CD14-positive monocyte (primary cell): ENCODE measurements at regions of chr4 and their contacts with region 1.

Region 1: GRCh38 chr4:83034630-83035494 is at the start of gene COPS4:
- DNase-seq: peak; percentile 99 to 100 (median 99)
- H3K4me3 ChIP-seq: peak within 1 kb of the TSS; percentile 72 to 89 (median 84)
- H3K4me3 Mint-ChIP-seq: peak within 1 kb of the TSS; percentile 99
- H3K27ac ChIP-seq: peak within 1 kb of the TSS; percentile 85 to 88
- H3K27ac Mint-ChIP-seq: peak within 1 kb of the TSS; percentile 96 to 99 (median 98)
- H3K4me1 ChIP-seq: peaks cover 9 to 10% of the 10 kb centered on the region in 2 donors
- H3K4me1 Mint-ChIP-seq: peaks cover 27% of the 10 kb centered on the region
- H3K27me3 ChIP-seq: no peaks in the 10 kb centered on the region
- H3K27me3 Mint-ChIP-seq: no peaks in the 10 kb centered on the region
- CTCF ChIP-seq: peak; percentile 44
- polyA plus RNA-seq, gene COPS4: 16.0 to 54.7 (median 54.5) TPM

Region 2: GRCh38 chr4:83012687-83013419 is 22.0 kb before region 1 on chr4:
- intact Hi-C with region 1: loop called (anchors 1 to 2 kb)
- DNase-seq: peak; percentile 95 to 99 (median 96)
- H3K4me3 ChIP-seq: peak overlapping the region; percentile 80 to 98 (median 94)
- H3K4me3 Mint-ChIP-seq: peak overlapping the region; percentile 82 to 92
- H3K27ac ChIP-seq: peak overlapping the region; percentile 84 to 99
- H3K27ac Mint-ChIP-seq: peak overlapping the region; percentile 94 to 99 (median 98)
- H3K4me1 ChIP-seq: peaks cover 31 to 35% of the 10 kb centered on the region in 2 donors
- H3K4me1 Mint-ChIP-seq: peaks cover 39% of the 10 kb centered on the region
- H3K27me3 ChIP-seq: no peaks in the 10 kb centered on the region
- H3K27me3 Mint-ChIP-seq: peaks cover 0 to 1% (median 0%) of the 10 kb centered on the region in 3 donors
- CTCF ChIP-seq: peak; percentile 64

Region 3: DNA sequence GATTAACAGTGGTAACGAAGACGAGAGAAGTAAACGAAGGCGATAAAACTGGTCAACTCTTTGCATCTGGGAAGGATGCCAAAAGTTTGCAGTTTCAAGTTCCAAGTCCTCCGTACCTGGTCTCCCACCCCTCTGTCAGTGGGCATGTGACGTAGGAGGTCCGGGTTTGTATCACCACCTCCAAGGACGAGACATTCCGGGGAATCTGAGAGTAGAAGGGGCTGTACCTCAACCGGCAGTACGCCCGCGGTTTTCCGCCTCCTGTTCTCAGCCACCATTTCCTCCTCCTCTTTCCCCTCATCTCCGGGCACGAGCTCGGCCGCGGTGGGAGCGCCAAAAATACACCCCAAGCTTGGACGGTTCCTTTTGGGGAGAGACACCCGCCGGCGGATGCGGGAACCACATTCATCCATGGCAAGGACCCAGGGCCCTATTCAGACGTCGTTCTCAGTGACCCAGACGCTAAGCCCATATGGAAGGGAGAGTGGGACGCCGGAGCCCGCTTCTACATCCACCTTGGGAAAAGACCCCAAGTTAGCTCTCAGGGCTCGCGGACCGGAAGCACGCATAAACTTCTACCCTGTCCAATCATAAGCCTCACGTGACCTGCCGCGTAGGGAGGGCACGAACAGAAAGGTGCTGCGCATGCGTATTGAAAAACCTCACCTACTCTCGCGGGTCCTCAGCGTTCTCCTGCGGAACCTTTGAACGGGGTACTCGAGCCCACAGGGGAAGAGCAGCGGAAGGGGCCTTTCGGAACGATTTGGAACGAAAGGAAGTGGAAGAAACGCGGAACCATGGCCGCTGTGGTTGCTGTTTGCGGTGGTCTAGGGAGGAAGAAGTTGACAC is 420.6 kb after region 1 on chr4 and contains the starts of genes HELQ and MRPS18C:
- intact Hi-C with region 1: loop called in 1 of 2 experiments (anchors 10 kb)
- DNase-seq: peak; percentile 98 to 99 (median 99)
- H3K4me3 ChIP-seq: peak within 1 kb of the TSS; percentile 94 to 97 (median 95)
- H3K4me3 Mint-ChIP-seq: peak within 1 kb of the TSS; percentile 96 to 98
- H3K27ac ChIP-seq: peak within 1 kb of the TSS; percentile 99
- H3K27ac Mint-ChIP-seq: peak within 1 kb of the TSS; percentile 98 to 100 (median 100)
- H3K4me1 ChIP-seq: peaks cover 21 to 31% of the 10 kb centered on the region in 2 donors
- H3K4me1 Mint-ChIP-seq: peaks cover 27% of the 10 kb centered on the region
- H3K27me3 ChIP-seq: no peaks in the 10 kb centered on the region
- H3K27me3 Mint-ChIP-seq: peaks cover 0 to 3% (median 1%) of the 10 kb centered on the region in 3 donors
- CTCF ChIP-seq: peak; percentile 34
- polyA plus RNA-seq, gene HELQ: 7.0 to 11.3 (median 11.1) TPM
- polyA plus RNA-seq, gene MRPS18C: 13.6 to 70.5 (median 42.4) TPM